ENCODE measurements at regions of chr15 and their contacts with region 1.

Region 1: DNA sequence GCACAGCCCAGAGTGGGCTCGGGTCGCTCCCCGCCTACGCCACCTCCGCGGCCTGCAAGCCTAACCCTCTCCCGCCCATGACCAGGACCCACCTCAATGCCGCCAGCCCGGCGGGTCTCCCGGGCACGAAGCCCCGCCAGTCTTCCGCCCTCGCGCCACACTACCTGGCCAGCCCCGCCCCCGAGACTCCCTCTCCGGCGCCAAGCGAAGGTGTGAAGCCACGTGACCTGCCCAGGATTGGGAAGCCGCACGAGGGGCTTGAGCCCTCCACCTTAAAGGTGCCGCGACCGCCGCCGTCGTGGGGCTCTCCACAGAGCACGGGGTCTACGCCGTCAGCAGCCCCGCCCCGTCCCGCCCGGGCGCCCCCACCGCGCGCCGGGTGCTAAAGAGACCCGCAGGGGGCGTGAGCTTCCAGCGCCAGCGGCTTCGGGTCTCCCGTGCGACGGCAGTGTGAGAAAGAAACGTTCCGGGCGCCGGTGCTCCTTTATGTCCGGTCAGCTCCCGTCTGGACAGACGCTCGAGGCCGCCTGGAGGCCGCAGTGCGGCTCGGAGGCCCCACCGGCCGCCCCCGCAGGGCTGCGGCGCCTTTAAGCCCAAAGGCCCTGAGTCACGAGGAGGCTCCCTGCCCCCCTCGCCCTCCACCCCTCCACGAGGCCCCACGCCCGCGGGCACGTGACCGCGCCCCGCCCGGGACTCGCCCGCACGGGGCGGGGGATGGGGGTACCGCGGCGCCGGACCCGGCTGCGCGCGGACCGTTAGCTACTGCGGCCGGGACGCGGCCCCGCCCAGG is at the start of gene CPEB1:
- DNase-seq: peak; percentile 60
- ATAC-seq: peak; percentile 66
- H3K4me3 Mint-ChIP-seq: no peak within 1 kb of the TSS
- H3K27ac Mint-ChIP-seq: no peak within 1 kb of the TSS
- H3K4me1 Mint-ChIP-seq: peaks cover 3% of the 10 kb centered on the region
- H3K27me3 Mint-ChIP-seq: peaks cover 42% of the 10 kb centered on the region
- total RNA-seq, gene CPEB1: 0.16 to 0.18 TPM

Region 2: GRCh38 chr15:82186719-82187406 is 460.4 kb before region 1 on chr15:
- CTCF ChIA-PET with region 1: no interaction called
- POLR2A ChIA-PET with region 1: no interaction called
- intact Hi-C with region 1: no loop called
- DNase-seq: no peak
- ATAC-seq: no peak
- H3K4me3 Mint-ChIP-seq: no peak overlapping the region
- H3K27ac Mint-ChIP-seq: no peak overlapping the region
- H3K4me1 Mint-ChIP-seq: no peaks in the 10 kb centered on the region
- H3K27me3 Mint-ChIP-seq: no peaks in the 10 kb centered on the region

Region 3: DNA sequence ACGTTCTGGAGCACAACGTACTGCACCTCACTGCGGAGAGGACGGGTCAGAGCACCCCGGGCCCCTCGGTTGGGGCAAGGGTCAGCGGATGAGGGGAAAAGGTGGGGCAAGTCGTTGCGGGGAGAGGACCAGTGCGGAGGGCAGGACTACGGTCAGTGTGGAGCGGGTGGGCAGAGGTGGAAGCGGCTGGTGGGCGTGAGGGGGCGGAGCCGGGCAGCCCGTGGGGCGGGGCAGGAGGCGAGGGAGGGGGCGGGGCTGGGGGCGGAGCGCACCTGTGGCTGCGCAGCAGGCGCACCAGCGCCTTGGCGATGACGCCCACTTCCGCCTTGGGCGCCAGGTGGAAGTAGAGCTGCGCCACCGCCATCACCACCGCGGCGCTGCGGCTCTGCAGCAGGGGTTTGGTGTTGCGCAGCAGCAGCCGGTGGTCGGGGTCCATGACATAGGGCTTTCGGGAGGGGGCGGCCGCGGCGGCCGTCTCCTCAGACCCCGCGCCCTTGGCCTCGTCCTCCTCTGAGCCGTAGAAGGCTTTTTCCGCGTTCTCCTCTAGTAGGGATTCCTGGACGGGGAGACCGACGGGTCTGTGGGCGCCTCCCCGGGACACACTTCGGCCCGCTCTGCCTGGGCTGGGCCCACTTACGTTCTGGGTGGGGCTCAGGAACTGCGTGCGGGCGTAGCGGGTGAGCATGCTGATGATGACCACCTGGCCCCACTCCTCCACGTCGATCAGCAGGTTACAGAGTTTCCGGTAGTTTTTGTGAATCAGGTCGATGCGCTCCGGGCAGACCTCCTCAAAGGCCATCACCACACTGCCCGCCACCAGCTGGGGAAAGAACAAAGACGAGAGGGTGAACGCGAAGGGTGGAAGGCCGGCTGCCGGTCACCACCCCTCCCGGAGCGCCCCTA is 33.2 kb after region 1 on chr15:
- CTCF ChIA-PET with region 1: no interaction called
- POLR2A ChIA-PET with region 1: no interaction called
- intact Hi-C with region 1: loop called in 1 of 2 experiments (anchors 1 kb)
- DNase-seq: peak; percentile 90
- ATAC-seq: peak; percentile 96
- H3K4me3 Mint-ChIP-seq: peak overlapping the region; percentile 80
- H3K27ac Mint-ChIP-seq: peak overlapping the region; percentile 85
- H3K4me1 Mint-ChIP-seq: peaks cover 10% of the 10 kb centered on the region
- H3K27me3 Mint-ChIP-seq: peaks cover 7% of the 10 kb centered on the region

Measured in activated CD4-positive, alpha-beta T cell treated with anti-CD3 and anti-CD28 coated beads for 36 hours (primary cell).